Heart left ventricle (tissue), 16 donors: ENCODE measurements at regions of chr9 and their contacts with region 1.

Region 1: DNA sequence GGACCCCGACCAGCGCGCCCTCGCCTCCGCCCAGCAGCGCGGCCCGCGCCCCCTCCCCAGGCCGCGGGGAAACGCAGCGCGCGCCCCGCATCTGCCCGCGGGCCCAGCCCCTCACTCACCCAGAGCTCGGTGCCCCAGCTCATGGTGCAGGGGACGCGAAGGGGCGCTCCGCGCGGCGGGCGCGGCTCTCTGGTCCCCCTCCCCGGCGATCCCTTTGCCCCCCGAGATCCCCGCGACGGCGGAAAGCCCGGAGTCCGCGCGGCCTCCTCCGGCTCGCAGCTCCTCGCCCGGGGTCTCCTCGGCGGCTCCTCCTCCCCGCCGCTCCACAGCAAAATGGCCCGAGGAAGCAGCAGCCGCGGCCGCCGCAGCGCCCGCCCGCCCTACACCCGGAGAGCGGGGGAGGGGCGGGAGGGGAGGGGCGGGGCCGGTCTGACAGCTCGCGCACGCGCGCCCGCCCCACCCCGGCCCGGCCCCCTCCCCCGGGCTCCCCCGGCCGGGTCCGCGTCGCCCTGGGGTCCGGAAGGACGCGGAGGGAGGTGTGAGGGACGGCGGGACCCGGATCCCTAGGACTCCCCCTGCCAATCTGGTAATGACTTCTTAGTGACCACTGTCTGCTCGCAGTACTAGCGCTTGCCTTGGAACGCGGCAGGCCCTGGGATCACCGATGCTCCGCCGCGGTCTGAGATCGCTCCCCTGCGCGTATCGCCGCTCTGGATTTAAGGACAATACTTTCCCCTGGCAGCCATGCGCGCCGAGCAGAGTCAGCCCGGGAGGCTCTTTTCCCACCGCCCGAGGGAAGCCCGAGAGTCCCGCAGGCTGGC is at the start of gene FNBP1:
- DNase-seq: peak; percentile 85 to 92 (median 88)
- ATAC-seq: peak; percentile 77 to 96 (median 93)
- H3K4me3 ChIP-seq: peak within 1 kb of the TSS; percentile 65 to 97 (median 94)
- H3K27ac ChIP-seq: peak within 1 kb of the TSS; percentile 89 to 97 (median 94)
- H3K4me1 ChIP-seq: peaks cover 0 to 67% (median 24%) of the 10 kb centered on the region in 12 donors
- H3K27me3 ChIP-seq: no peaks in the 10 kb centered on the region
- CTCF ChIP-seq: no peak
- POLR2A ChIP-seq: peak; percentile 9 to 81
- total RNA-seq, gene FNBP1: 16.6 to 47.3 (median 24.8) TPM

Region 2: GRCh38 chr9:129932303-129933151 is 110.5 kb before region 1 on chr9:
- intact Hi-C with region 1: loop called in 1 of 10 experiments (anchors 5 kb)
- DNase-seq: no peak
- ATAC-seq: peak in 2 of 4 donors; percentile 37 to 47
- H3K4me3 ChIP-seq: peak overlapping the region in 3 of 12 donors; percentile 6 to 7 (median 7)
- H3K27ac ChIP-seq: peak overlapping the region; percentile 5 to 88 (median 62)
- H3K4me1 ChIP-seq: peaks cover 0 to 61% (median 35%) of the 10 kb centered on the region in 12 donors
- H3K27me3 ChIP-seq: no peaks in the 10 kb centered on the region
- CTCF ChIP-seq: no peak
- POLR2A ChIP-seq: no peak

Region 3: GRCh38 chr9:129962889-129963703 is 79.9 kb before region 1 on chr9:
- intact Hi-C with region 1: loop called in 4 of 10 experiments (anchors 5 to 10 kb)
- DNase-seq: peak in 4 of 5 donors; percentile 45 to 64 (median 58)
- ATAC-seq: peak; percentile 64 to 90 (median 80)
- H3K4me3 ChIP-seq: peak overlapping the region in 11 of 12 donors; percentile 27 to 70 (median 52)
- H3K27ac ChIP-seq: peak overlapping the region; percentile 85 to 97 (median 89)
- H3K4me1 ChIP-seq: peaks cover 0 to 68% (median 21%) of the 10 kb centered on the region in 12 donors
- H3K27me3 ChIP-seq: no peaks in the 10 kb centered on the region
- CTCF ChIP-seq: no peak
- POLR2A ChIP-seq: peak in 1 of 2 donors; percentile 48

Region 4: DNA sequence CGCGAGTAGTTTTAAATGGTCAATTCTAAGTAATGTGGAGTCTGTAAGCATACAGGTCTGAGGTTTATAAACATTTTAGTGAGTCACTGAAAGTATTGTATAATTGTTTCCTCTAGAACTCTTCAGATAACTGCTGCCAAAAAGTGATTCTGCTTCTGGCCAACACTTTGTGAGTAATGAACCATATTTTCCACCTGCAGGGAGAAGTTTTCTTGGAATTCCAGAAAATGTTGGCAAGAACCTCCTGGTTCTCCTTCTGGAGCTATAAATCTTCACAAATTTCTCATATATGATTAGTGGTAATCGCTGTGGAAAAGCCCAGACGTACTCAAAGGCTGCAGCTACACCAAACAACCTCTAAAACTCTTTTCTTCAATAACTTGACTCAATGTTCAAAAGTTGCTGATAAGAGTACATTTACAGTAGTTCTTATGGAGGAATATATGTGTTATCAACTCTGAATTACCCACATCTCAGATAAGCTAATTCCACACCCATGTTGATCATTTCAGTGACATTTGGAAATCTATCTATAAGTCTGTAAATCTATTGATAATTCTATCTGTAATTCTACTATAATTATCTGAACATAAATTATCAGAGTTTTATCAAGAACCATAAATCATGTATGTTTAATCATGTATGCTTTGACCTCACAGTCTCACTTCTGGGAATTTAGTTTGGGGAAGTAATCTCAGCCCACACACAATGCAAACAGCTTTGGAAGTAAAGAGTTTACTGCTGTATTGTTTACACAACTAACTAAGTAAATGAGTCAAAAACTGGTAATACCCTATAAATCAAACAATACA is 74.1 kb before region 1 on chr9:
- intact Hi-C with region 1: loop called in 4 of 10 experiments (anchors 5 to 10 kb)
- DNase-seq: no peak
- ATAC-seq: peak in 2 of 4 donors; percentile 39 to 61
- H3K4me3 ChIP-seq: no peak overlapping the region
- H3K27ac ChIP-seq: peak overlapping the region in 7 of 12 donors; percentile 9 to 86 (median 41)
- H3K4me1 ChIP-seq: peaks cover 0 to 44% (median 16%) of the 10 kb centered on the region in 12 donors
- H3K27me3 ChIP-seq: no peaks in the 10 kb centered on the region
- CTCF ChIP-seq: no peak
- POLR2A ChIP-seq: no peak

Region 5: DNA sequence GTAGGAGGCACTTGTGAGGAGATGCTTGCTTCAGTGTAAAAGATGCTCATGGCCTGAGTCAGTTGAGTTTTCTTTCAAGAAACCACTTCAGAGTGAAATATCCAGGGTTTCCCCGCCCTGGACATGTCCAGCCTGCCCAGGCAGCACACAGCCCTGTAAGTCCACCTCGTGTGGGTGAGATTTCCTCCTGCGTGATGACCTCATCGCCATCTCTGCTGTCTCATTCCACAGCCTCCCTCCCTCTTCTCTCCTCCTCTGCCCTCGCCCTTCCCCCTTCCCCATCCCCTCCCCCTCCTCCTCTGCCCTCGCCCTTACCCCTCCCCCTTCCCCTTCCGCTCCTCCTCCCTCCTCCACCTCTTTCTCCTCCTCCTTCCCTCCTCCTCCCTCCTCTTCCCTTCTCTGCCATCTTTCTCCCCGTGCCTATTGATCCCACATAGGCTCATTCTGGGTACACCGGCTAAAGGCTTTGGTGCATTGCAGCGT is 95.2 kb after region 1 on chr9:
- intact Hi-C with region 1: no loop called
- DNase-seq: peak; percentile 49 to 77 (median 62)
- ATAC-seq: peak in 3 of 4 donors; percentile 74 to 87 (median 76)
- H3K4me3 ChIP-seq: no peak overlapping the region
- H3K27ac ChIP-seq: peak overlapping the region in 9 of 12 donors; percentile 1 to 87 (median 46)
- H3K4me1 ChIP-seq: peaks cover 0 to 36% (median 25%) of the 10 kb centered on the region in 12 donors
- H3K27me3 ChIP-seq: no peaks in the 10 kb centered on the region
- CTCF ChIP-seq: no peak
- POLR2A ChIP-seq: no peak